B cell (primary cell): ENCODE measurements at regions of chr1 and their contacts with region 1.

Region 1: DNA sequence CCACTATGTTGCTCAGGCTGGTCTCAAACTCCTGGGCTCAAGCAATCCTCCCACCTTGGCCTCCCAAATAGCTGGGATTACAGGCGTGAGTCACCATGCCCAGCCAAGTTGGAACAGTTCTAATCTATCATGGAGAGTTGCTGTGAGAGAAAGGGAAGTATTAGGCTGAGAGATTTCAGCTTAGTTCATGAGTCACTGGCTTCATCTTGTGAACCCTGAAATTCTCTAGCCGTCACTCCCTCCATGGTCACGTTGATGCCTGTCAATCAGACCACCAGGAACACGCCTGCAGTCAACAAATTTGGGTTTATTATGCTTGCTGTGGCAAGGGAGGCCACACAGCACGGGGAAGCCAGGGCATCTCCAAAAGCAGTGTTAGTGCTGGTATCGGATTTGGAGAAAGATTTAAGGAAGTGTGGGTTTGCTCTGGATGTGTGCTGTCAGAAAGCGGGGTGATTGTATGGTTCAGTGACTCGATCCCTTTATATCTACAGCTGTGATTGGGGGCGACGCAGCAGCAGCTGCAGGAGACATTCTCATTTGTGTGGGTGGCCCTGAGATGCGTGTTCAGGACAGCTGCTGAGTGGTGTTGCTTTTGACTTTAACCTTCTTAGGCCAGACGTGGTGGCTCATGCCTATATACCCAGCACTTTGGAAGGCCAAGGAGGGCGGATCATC is 18.7 kb downstream of the UQCRHL start:
- DNase-seq: no peak
- ATAC-seq: no peak
- H3K4me3 ChIP-seq: no peak overlapping the region
- H3K4me3 Mint-ChIP-seq: no peak overlapping the region
- H3K27ac ChIP-seq: no peak overlapping the region
- H3K27ac Mint-ChIP-seq: no peak overlapping the region
- H3K4me1 ChIP-seq: peaks cover 3 to 5% of the 10 kb centered on the region in 2 donors
- H3K4me1 Mint-ChIP-seq: peaks cover 2% of the 10 kb centered on the region
- H3K27me3 ChIP-seq: no peaks in the 10 kb centered on the region
- H3K27me3 Mint-ChIP-seq: peaks cover 10% of the 10 kb centered on the region
- CTCF ChIP-seq: no peak

Region 2: DNA sequence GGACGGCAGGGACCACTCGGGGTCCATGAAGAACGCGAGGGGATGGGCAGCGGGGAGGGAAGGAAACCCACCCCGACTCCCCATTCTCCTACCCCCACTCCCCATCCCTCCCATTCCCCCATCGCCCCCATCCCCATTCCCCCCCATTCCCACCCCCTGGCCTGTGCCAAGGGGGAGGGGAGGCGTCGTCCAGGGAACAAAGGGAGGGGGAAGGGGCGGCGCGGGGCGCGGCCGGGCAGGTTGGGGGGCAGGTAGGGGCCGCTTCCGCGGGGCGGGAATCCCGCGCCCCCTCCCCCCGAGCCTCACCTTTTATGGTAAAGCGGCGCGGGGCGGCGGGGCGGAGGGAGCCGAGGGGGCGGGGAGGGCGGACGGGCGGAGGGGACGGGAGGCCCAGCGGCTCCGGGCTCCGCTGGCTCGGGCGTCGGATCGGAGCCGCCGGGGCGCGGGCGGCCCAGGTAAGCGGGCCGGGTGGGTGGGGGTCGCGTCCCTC is 30.3 kb before region 1 on chr1 and contains the start of gene FBLIM1:
- CTCF ChIA-PET with region 1: interaction called, 6 read pairs
- POLR2A ChIA-PET with region 1: interaction called, 13 read pairs
- intact Hi-C with region 1: no loop called
- DNase-seq: no peak
- ATAC-seq: no peak
- H3K4me3 ChIP-seq: peak within 1 kb of the TSS in 3 of 5 experiments; percentile 15 to 42 (median 25)
- H3K4me3 Mint-ChIP-seq: peak within 1 kb of the TSS; percentile 81
- H3K27ac ChIP-seq: no peak within 1 kb of the TSS
- H3K27ac Mint-ChIP-seq: no peak within 1 kb of the TSS
- H3K4me1 ChIP-seq: peaks cover 20 to 25% of the 10 kb centered on the region in 2 donors
- H3K4me1 Mint-ChIP-seq: peaks cover 24% of the 10 kb centered on the region
- H3K27me3 ChIP-seq: peaks cover 0 to 54% (median 29%) of the 10 kb centered on the region in 4 experiments
- H3K27me3 Mint-ChIP-seq: peaks cover 50% of the 10 kb centered on the region
- CTCF ChIP-seq: no peak
- total RNA-seq, gene FBLIM1: not detected in 2 replicates

Region 3: GRCh38 chr1:16055613-16056520 is 267.1 kb after region 1 on chr1:
- CTCF ChIA-PET with region 1: interaction called, 27 read pairs
- POLR2A ChIA-PET with region 1: no interaction called
- intact Hi-C with region 1: loop called (anchors 1 kb)
- DNase-seq: peak; percentile 91
- ATAC-seq: peak; percentile 100
- H3K4me3 ChIP-seq: no peak overlapping the region
- H3K4me3 Mint-ChIP-seq: no peak overlapping the region
- H3K27ac ChIP-seq: no peak overlapping the region
- H3K27ac Mint-ChIP-seq: no peak overlapping the region
- H3K4me1 ChIP-seq: peaks cover 4 to 5% of the 10 kb centered on the region in 2 donors
- H3K4me1 Mint-ChIP-seq: peaks cover 6% of the 10 kb centered on the region
- H3K27me3 ChIP-seq: peaks cover 0 to 2% (median 0%) of the 10 kb centered on the region in 4 experiments
- H3K27me3 Mint-ChIP-seq: peaks cover 9% of the 10 kb centered on the region
- CTCF ChIP-seq: peak; percentile 74

Region 4: GRCh38 chr1:16187748-16188401 is 399.1 kb after region 1 on chr1:
- CTCF ChIA-PET with region 1: interaction called, 3 read pairs
- POLR2A ChIA-PET with region 1: no interaction called
- intact Hi-C with region 1: loop called (anchors 1 kb)
- DNase-seq: peak; percentile 81
- ATAC-seq: peak; percentile 88
- H3K4me3 ChIP-seq: no peak overlapping the region
- H3K4me3 Mint-ChIP-seq: no peak overlapping the region
- H3K27ac ChIP-seq: no peak overlapping the region
- H3K27ac Mint-ChIP-seq: no peak overlapping the region
- H3K4me1 ChIP-seq: peaks cover 5 to 7% of the 10 kb centered on the region in 2 donors
- H3K4me1 Mint-ChIP-seq: peaks cover 2% of the 10 kb centered on the region
- H3K27me3 ChIP-seq: peaks cover 0 to 26% (median 9%) of the 10 kb centered on the region in 4 experiments
- H3K27me3 Mint-ChIP-seq: peaks cover 24% of the 10 kb centered on the region
- CTCF ChIP-seq: peak; percentile 95